Mammary epithelial cell (primary cell): ENCODE measurements at regions of chr7 and their contacts with region 1.

Region 1: GRCh38 chr7:108114117-108114841 is 15.9 kb downstream of the LAMB4 start:
- DNase-seq: peak; percentile 38
- H3K4me3 ChIP-seq: no peak overlapping the region
- H3K27ac ChIP-seq: no peak overlapping the region
- H3K4me1 ChIP-seq: no peaks in the 10 kb centered on the region
- H3K27me3 ChIP-seq: no peaks in the 10 kb centered on the region
- CTCF ChIP-seq: peak; percentile 70 to 90

Region 2: DNA sequence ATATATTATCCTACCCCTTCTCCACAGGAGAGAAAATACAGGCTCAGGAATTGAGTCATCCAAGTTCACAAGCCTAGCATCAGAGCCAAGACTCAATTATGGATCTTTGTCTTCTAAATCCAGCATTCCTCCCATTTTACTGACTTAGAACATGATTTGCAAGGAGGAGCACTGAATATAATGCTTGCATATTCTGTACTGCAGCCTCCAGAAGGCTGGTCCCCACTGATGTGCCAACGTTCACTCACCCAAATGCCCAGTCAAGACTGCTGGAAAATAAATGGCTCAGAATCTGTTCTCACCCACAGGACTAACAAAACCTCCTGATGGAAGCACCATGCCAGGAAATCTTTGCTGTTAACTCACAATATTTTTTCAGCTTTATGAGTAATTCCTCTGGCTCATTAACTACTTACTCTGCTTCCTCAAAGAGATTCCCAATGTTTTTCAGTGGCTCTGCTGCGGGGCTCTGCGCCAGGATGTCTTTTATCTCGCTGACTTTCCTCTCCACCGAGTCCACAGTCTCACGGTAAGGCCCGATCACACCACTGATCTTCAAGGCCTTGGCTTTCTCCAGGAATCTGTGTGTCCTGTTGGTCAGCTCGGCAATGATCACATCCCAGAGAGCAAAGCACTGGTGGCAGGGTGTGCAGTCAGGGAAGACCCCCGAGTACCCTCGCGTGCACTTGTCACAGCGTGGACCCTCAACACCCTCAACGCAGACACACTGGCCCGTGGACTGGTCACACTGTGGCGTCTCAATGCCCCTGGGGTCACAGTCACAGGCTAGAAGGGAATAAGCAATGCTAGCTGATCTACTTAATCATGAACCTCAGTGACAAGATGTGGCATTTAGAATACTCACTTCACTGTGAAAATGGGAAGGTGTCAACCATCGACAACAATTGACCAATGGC is 174.4 kb before region 1 on chr7:
- CTCF ChIA-PET with region 1: no interaction called
- dilution Hi-C with region 1: no loop called
- in situ Hi-C with region 1: no loop called
- intact Hi-C with region 1: loop called (anchors 10 kb)
- DNase-seq: no peak
- H3K4me3 ChIP-seq: no peak overlapping the region
- H3K27ac ChIP-seq: no peak overlapping the region
- H3K4me1 ChIP-seq: peaks cover 27% of the 10 kb centered on the region
- H3K27me3 ChIP-seq: no peaks in the 10 kb centered on the region
- CTCF ChIP-seq: no peak

Region 3: DNA sequence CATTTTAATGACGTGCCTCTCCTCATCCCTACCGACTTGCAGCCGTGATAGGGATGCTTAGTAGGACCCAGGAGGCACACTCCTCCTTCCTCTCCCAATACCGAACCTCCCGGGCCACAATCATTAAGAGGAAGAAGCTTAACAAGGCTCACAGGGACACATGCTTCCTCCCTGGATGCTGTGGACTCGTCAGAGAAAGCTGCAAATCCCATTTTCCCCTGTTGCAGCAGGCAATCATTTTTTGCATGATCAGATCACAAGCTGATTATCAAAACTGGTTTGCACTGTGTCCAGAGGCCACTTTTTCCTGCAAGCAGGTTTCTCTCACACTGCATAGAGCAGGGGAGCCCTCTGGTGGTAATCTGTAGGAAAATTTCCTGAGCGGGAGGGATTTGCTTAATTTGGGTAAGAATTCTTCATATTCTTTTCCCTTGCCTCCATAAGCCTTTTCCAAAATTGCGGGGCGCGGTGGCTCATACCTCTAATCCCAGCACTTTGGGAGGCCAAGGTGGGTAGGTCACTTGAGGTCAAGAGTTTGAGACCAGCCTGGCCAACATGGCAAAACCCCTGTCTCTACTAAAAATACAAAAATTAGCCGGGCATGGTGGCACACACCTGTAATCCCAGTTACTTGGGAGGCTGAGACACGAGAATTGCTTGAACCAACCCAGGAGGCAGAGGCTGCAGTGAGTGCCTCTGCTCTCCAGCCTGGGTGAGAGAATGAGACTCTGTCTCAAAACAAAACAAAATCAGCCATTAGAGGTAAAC is 32.0 kb after region 1 on chr7:
- CTCF ChIA-PET with region 1: interaction called, 8 read pairs
- dilution Hi-C with region 1: loop called (anchors 5 kb)
- in situ Hi-C with region 1: loop called (anchors 5 kb)
- intact Hi-C with region 1: loop called (anchors 1 kb)
- DNase-seq: peak; percentile 54
- H3K4me3 ChIP-seq: no peak overlapping the region
- H3K27ac ChIP-seq: no peak overlapping the region
- H3K4me1 ChIP-seq: no peaks in the 10 kb centered on the region
- H3K27me3 ChIP-seq: no peaks in the 10 kb centered on the region
- CTCF ChIP-seq: peak; percentile 86 to 92

Region 4: DNA sequence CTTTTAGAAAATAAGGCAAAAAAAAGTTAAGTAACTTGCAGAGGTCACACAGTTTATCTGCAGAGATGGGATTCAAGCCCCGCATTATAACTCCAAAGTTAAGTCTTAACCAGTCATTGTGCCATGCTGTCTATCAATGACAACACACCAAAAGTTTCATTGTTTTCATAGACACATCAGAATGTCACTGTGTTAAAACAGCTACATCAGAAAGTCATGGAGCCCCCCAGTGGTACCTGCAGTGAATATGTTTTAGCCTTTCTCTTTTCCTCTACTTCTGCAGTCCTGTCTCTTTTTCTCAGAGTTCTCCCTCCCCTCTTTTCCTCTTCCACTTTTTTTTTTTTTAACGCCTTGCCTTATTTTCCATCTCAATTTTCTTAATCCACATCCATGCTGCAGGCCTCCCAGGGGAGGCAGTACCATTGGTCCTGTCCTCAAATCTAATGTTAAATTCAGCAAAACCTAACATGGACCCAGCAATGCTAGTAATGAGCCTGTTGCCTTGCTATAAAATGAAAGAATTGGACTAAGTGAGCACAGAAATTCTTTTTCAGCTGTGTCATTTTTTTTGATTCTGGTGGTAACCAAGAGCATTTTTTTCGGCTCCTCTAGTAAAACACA is 345.8 kb after region 1 on chr7:
- CTCF ChIA-PET with region 1: interaction called, 5 read pairs
- dilution Hi-C with region 1: no loop called
- in situ Hi-C with region 1: no loop called
- intact Hi-C with region 1: loop called (anchors 1 kb)
- DNase-seq: peak; percentile 22
- H3K4me3 ChIP-seq: no peak overlapping the region
- H3K27ac ChIP-seq: no peak overlapping the region
- H3K4me1 ChIP-seq: peaks cover 2% of the 10 kb centered on the region
- H3K27me3 ChIP-seq: no peaks in the 10 kb centered on the region
- CTCF ChIP-seq: peak; percentile 61 to 67

Region 5: GRCh38 chr7:108497082-108497725 is 382.9 kb after region 1 on chr7:
- CTCF ChIA-PET with region 1: no interaction called
- dilution Hi-C with region 1: no loop called
- in situ Hi-C with region 1: no loop called
- intact Hi-C with region 1: loop called (anchors 1 kb)
- DNase-seq: peak; percentile 42
- H3K4me3 ChIP-seq: no peak overlapping the region
- H3K27ac ChIP-seq: no peak overlapping the region
- H3K4me1 ChIP-seq: no peaks in the 10 kb centered on the region
- H3K27me3 ChIP-seq: no peaks in the 10 kb centered on the region
- CTCF ChIP-seq: peak; percentile 80 to 93